CD4-positive, alpha-beta memory T cell (primary cell): ENCODE measurements at regions of chr17 and their contacts with region 1.

Region 1: DNA sequence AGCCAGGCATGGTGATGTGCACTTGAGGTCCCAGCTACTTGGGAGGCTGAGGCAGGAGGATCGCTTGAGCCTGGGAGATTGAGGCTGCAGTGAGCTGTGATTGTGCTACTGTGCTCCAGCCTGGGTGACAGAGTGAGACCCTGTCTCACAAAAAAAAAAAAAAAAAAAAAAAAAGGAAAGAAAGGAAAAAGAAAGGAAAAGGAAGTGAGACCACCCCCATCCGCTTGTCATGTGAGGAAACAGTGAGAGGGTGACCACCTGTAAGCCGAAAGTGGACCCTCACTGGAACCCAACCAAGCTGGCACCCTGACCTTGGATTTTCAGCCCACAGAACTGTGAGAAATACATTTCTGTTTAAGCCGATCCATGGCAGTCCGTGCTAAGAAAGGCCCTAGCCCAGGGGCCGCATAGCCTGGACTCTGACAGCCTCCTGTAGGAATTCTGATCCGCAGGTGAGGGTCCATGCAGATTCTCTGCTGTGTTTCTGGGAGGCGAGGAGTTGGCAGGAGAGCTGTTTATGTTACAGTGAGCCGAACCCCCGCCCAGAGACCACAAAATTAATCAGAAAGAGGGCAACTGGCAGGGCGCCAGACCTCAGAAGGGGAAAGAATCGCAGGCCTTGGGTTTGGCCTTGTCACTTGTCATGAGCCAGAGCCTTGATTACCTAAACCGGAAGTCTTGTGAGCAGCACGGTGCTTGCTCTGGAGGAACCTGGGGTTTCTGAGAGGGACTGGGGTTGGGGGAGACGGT is 945 bp downstream of the SGSH start:
- DNase-seq: peak; percentile 93 to 96 (median 93)
- H3K4me3 ChIP-seq: peak overlapping the region; percentile 96
- H3K4me3 Mint-ChIP-seq: peak overlapping the region; percentile 87 to 96 (median 94)
- H3K27ac ChIP-seq: peak overlapping the region; percentile 96
- H3K27ac Mint-ChIP-seq: peak overlapping the region; percentile 91 to 98 (median 97)
- H3K4me1 ChIP-seq: peaks cover 29% of the 10 kb centered on the region
- H3K4me1 Mint-ChIP-seq: peaks cover 23 to 61% (median 44%) of the 10 kb centered on the region in 4 donors
- H3K27me3 ChIP-seq: no peaks in the 10 kb centered on the region
- H3K27me3 Mint-ChIP-seq: no peaks in the 10 kb centered on the region

Region 2: DNA sequence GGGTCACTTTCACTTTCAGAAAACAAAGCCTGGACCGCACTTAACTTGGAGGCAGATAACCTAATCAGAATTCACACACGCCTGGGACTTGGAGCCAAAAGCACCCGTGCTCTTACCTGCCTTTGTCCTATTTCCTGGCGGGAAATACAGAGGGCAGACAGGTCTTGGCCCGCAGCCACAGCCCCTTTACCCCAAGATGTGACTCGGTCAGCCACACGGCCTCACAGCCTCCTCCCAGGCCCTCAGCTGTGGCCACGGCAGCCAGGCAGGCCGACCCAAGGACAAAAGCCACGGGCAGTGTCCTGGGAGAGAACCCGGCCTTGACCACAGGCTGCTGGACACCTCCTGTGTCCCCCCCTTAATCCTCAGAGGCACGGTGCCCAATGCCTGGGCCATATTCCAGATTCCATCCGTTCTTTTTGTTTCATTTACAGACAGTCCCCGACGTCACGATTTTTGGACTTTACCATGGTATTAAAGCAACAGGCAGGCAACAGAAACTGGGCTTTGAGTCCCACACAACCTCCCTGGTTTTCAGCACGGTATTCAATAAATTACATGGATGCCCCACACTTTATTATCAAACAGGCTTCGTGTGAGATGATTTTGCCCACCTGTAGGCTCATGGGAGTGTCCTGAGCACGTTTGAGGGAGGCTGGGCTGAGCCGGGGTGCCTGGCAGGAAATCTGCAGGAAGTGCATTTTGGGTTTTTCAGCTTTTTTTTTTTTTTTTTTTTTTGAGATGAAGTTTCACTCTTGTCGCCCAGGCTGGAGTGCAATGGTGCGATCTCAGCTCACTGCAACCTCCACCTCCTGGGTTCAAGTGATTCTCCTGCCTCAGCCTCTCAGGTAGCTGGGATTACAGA is 147.8 kb before region 1 on chr17:
- CTCF ChIA-PET with region 1: no interaction called
- POLR2A ChIA-PET with region 1: no interaction called
- intact Hi-C with region 1: no loop called
- DNase-seq: no peak
- H3K4me3 ChIP-seq: no peak overlapping the region
- H3K4me3 Mint-ChIP-seq: peak overlapping the region in 1 of 8 donors; percentile 34
- H3K27ac ChIP-seq: no peak overlapping the region
- H3K27ac Mint-ChIP-seq: peak overlapping the region in 1 of 7 donors; percentile 57
- H3K4me1 ChIP-seq: no peaks in the 10 kb centered on the region
- H3K4me1 Mint-ChIP-seq: peaks cover 4 to 7% (median 5%) of the 10 kb centered on the region in 4 donors
- H3K27me3 ChIP-seq: no peaks in the 10 kb centered on the region
- H3K27me3 Mint-ChIP-seq: peaks cover 2 to 3% of the 10 kb centered on the region in 2 donors

Region 3: DNA sequence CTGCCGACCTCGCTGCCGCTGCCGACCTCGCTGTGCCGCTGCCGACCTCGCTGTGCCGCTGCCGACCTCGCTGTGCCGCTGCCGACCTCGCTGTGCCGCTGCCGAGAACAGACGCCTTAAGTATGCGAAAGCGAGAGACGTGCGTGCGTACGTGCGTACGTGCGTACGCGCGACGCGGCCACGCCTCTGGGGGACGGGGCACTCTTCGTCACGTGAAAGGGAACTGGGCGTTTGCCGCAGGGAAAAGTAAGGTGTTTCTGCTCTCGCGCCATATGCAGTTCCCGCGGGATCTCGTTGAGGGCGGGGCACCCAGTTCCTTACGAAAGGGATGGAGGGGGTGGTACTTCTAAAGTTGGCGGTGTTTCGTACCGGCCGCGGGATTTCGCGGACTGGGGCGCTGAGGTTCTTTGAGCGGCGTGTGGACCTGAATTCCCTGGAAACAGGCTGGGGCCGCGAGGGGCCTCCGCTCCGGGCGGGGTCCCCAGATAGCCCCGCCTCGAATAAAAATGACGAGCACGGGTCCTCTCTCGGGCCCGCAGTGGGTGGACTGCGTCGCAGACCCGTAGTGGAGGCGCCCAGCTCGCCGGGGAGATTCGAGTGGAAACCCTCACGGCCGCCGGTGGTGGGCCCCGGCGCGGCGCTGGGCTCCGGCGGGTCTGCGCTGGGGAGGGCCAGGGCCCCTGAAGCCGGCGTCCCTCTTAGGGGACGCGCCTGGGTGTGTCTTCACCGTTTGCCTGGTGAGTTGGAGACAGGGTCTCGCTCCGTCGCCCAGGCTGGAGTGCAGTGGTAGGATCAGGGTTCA is 72.0 kb before region 1 on chr17 and contains the start of gene EIF4A3:
- CTCF ChIA-PET with region 1: no interaction called
- POLR2A ChIA-PET with region 1: interaction called, 3 read pairs
- intact Hi-C with region 1: loop called (anchors 2 kb)
- DNase-seq: peak; percentile 95 to 99 (median 97)
- H3K4me3 ChIP-seq: peak within 1 kb of the TSS; percentile 48 to 94
- H3K4me3 Mint-ChIP-seq: peak within 1 kb of the TSS; percentile 93 to 99 (median 98)
- H3K27ac ChIP-seq: peak within 1 kb of the TSS; percentile 83
- H3K27ac Mint-ChIP-seq: peak within 1 kb of the TSS; percentile 90 to 99 (median 98)
- H3K4me1 ChIP-seq: peaks cover 36% of the 10 kb centered on the region
- H3K4me1 Mint-ChIP-seq: peaks cover 23 to 54% (median 35%) of the 10 kb centered on the region in 4 donors
- H3K27me3 ChIP-seq: no peaks in the 10 kb centered on the region
- H3K27me3 Mint-ChIP-seq: no peaks in the 10 kb centered on the region
- total RNA-seq, gene EIF4A3: 54.2 to 56.0 TPM

Region 4: GRCh38 chr17:80183581-80184422 is 35.4 kb before region 1 on chr17:
- CTCF ChIA-PET with region 1: no interaction called
- POLR2A ChIA-PET with region 1: no interaction called
- intact Hi-C with region 1: no loop called
- DNase-seq: no peak
- H3K4me3 ChIP-seq: no peak overlapping the region
- H3K4me3 Mint-ChIP-seq: no peak overlapping the region
- H3K27ac ChIP-seq: no peak overlapping the region
- H3K27ac Mint-ChIP-seq: no peak overlapping the region
- H3K4me1 ChIP-seq: no peaks in the 10 kb centered on the region
- H3K4me1 Mint-ChIP-seq: no peaks in the 10 kb centered on the region
- H3K27me3 ChIP-seq: peaks cover 6% of the 10 kb centered on the region
- H3K27me3 Mint-ChIP-seq: peaks cover 0 to 6% of the 10 kb centered on the region in 2 donors

Region 5: DNA sequence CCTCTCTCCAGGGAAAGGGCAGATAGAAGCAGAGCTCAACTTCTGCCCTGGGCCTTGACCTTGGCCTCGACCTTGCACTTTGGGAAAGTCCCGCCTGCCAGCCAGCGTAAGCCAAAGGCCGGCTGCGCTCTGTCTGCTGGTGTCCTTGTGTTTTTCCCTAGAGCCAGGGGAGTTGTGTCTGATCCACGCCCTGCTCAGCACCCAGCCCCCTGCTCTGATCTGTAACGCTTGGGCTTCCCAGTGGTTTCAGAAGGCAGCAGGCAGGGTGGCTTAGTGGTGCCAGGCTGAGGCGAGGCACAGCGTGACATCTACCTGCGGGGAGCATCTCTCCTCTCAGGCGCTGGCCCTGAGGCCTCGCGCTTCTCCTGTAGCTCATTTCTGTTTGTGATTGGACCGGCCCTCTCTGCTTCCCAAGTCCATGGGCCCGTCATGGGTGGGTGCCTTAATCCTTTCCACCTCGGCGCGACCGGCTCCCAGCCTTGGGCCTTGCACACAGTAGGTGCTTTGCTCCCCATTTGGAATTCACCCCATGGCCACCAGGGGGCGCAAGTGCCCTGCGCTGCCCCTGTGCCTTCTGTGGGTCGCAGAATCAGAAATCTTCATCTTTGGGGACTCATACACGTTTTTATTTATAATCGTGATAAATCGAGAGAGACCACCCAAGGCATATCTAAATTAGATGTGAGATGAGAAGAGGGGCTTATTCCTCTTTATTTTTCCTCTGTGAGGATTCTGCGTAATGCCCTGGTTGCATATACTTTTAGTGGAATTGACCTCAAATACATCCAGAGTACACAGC is 23.3 kb before region 1 on chr17:
- CTCF ChIA-PET with region 1: interaction called, 5 read pairs
- POLR2A ChIA-PET with region 1: interaction called, 13 read pairs
- intact Hi-C with region 1: loop called (anchors 1 kb)
- DNase-seq: peak; percentile 44 to 62 (median 57)
- H3K4me3 ChIP-seq: no peak overlapping the region
- H3K4me3 Mint-ChIP-seq: no peak overlapping the region
- H3K27ac ChIP-seq: no peak overlapping the region
- H3K27ac Mint-ChIP-seq: peak overlapping the region in 4 of 7 donors; percentile 10 to 87 (median 58)
- H3K4me1 ChIP-seq: no peaks in the 10 kb centered on the region
- H3K4me1 Mint-ChIP-seq: peaks cover 0 to 4% (median 4%) of the 10 kb centered on the region in 4 donors
- H3K27me3 ChIP-seq: no peaks in the 10 kb centered on the region
- H3K27me3 Mint-ChIP-seq: peaks cover 0 to 1% of the 10 kb centered on the region in 2 donors

Region 6: DNA sequence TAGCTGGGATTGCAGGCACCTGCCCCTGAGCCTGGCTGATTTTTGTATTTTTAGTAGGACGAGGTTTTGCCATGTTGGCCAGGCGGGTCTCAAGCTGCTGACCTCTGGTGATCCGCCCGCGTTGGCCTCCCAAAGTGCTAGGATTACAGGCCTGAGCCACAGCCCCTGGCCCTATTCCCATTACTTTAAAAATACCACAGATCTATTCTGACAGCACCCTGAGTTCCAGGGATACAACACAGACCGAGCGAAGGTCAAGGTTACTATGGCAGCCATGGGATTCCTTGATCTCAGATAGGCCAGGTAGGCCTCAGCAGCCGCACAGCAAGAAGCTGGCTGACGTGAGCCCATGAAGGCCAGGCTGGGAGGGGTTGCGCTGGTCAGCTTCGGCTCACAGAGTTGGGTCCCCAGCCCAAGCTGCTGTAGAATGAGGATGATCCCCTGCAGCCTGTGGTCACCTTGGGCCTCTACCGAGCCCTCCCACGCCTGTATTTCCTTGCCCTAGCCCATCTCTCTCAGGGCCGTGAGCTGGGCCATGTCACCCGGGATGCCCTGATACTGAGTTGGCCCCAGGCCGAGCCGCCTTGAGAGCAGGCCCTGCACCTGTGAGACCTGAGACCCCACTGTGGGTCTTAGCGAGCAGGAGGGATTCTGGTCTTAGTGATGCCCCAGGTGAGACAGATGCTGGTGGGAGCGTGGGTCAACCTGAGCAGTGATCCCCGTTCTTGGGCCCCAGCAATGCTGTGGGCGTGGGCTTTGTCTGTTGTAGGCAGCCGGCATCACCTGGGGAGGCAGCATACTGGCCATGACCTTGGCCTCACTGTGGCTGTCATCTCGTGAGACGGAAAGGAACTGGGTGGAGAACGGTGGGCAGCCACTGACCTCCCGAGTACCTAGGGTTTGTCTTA is 24.6 kb after region 1 on chr17:
- CTCF ChIA-PET with region 1: no interaction called
- POLR2A ChIA-PET with region 1: no interaction called
- intact Hi-C with region 1: no loop called
- DNase-seq: no peak
- H3K4me3 ChIP-seq: no peak overlapping the region
- H3K4me3 Mint-ChIP-seq: no peak overlapping the region
- H3K27ac ChIP-seq: no peak overlapping the region
- H3K27ac Mint-ChIP-seq: no peak overlapping the region
- H3K4me1 ChIP-seq: no peaks in the 10 kb centered on the region
- H3K4me1 Mint-ChIP-seq: no peaks in the 10 kb centered on the region
- H3K27me3 ChIP-seq: no peaks in the 10 kb centered on the region
- H3K27me3 Mint-ChIP-seq: no peaks in the 10 kb centered on the region

Region 7: GRCh38 chr17:80254396-80255251 is 35.4 kb after region 1 on chr17:
- CTCF ChIA-PET with region 1: interaction called, 9 read pairs
- POLR2A ChIA-PET with region 1: interaction called, 9 read pairs
- intact Hi-C with region 1: loop called (anchors 1 kb)
- DNase-seq: peak; percentile 52 to 79 (median 58)
- H3K4me3 ChIP-seq: no peak overlapping the region
- H3K4me3 Mint-ChIP-seq: peak overlapping the region; percentile 6 to 79 (median 51)
- H3K27ac ChIP-seq: peak overlapping the region; percentile 29
- H3K27ac Mint-ChIP-seq: peak overlapping the region; percentile 86 to 94 (median 90)
- H3K4me1 ChIP-seq: peaks cover 43% of the 10 kb centered on the region
- H3K4me1 Mint-ChIP-seq: peaks cover 27 to 58% (median 41%) of the 10 kb centered on the region in 4 donors
- H3K27me3 ChIP-seq: no peaks in the 10 kb centered on the region
- H3K27me3 Mint-ChIP-seq: no peaks in the 10 kb centered on the region